ENCODE measurements at regions of chr14 and their contacts with region 1.

Region 1: GRCh38 chr14:51846631-51847488 is 13.6 kb upstream of the GNG2 start:
- DNase-seq: peak; percentile 96
- ATAC-seq: peak; percentile 89
- H3K4me3 Mint-ChIP-seq: peak overlapping the region; percentile 73
- H3K27ac Mint-ChIP-seq: peak overlapping the region; percentile 96
- H3K4me1 Mint-ChIP-seq: peaks cover 74% of the 10 kb centered on the region
- H3K27me3 Mint-ChIP-seq: no peaks in the 10 kb centered on the region

Region 2: GRCh38 chr14:51715250-51715649 is 131.6 kb before region 1 on chr14:
- CTCF ChIA-PET with region 1: no interaction called
- POLR2A ChIA-PET with region 1: no interaction called
- DNase-seq: no peak
- ATAC-seq: no peak
- H3K4me3 Mint-ChIP-seq: no peak overlapping the region
- H3K27ac Mint-ChIP-seq: no peak overlapping the region
- H3K4me1 Mint-ChIP-seq: peaks cover 2% of the 10 kb centered on the region
- H3K27me3 Mint-ChIP-seq: no peaks in the 10 kb centered on the region

Region 3: DNA sequence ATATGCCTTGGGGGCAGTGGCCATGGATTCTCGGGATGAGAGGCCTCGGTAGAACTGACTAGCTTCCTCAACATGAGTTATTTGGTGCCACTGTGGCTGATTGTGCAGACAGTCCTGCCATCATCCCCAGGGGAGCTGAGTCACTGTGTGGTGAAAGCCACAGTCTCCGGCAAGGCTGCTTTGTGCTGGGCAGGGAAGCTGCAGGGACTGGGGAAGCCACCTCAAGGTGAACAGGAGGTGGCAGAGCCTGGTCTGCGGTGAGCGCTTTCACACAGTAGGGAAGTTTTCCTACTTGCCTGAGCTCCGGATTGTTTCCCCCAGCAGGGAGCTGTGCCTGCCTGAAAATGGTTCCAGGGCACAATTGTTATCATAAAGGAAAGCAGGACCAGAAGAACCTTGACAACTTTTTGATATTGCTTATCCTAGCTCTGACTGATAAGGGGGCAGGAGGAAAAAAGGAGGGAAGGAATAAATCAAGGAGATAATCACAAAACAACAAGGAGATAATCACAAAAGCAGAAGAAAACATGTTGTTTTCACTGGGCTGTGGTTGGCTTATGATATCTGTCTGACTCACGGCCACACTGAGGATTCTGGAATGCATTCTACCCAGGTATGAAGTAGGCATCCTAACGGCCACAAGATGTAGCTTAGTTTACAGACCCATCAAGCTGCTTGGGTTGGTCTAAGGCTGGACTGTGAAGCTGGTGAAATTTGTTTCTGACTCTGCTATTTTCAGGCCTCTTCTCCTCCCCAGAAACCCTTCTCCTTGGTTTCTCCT is 18.7 kb before region 1 on chr14:
- CTCF ChIA-PET with region 1: interaction called, 10 read pairs
- POLR2A ChIA-PET with region 1: interaction called, 12 read pairs
- DNase-seq: peak; percentile 80
- ATAC-seq: peak; percentile 99
- H3K4me3 Mint-ChIP-seq: no peak overlapping the region
- H3K27ac Mint-ChIP-seq: no peak overlapping the region
- H3K4me1 Mint-ChIP-seq: no peaks in the 10 kb centered on the region
- H3K27me3 Mint-ChIP-seq: peaks cover 4% of the 10 kb centered on the region

Region 4: DNA sequence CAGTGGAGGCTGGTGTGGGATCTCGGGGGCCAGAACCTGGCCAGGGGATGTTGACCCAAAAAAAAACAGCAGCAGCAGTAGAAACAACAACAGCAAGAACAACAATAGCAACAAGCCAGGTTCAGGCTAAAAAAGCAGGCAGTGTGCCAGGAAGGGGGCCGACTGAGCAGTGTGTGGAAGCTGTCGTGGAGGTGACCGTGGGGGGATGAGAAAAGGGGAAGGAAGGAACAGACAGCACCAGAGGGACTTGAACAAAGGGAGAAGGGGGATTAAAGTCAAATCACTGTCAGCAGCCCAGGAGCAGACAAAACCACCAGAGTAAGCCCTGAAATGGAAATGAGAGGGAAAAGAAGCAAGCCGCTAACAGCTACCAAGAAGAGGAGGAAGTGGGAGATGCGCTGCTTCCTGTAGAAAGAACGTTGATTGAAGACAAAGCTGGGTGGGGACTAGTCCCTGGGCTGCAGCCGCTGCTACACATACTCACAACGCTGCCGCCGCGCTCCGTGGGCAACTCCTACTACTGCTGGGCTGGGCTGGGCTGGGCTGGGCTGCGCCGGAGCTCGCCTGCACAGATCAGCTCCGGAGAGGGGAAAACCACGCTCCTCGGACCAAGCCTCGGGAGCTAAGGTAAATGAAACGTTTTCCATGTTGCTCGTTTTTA is 13.4 kb after region 1 on chr14 and contains the start of gene GNG2:
- CTCF ChIA-PET with region 1: interaction called, 47 read pairs
- POLR2A ChIA-PET with region 1: interaction called, 366 read pairs
- DNase-seq: peak; percentile 93
- ATAC-seq: peak; percentile 97
- H3K4me3 Mint-ChIP-seq: peak within 1 kb of the TSS; percentile 96
- H3K27ac Mint-ChIP-seq: peak within 1 kb of the TSS; percentile 95
- H3K4me1 Mint-ChIP-seq: peaks cover 48% of the 10 kb centered on the region
- H3K27me3 Mint-ChIP-seq: no peaks in the 10 kb centered on the region
- total RNA-seq, gene GNG2: 293 to 302 TPM

Region 5: DNA sequence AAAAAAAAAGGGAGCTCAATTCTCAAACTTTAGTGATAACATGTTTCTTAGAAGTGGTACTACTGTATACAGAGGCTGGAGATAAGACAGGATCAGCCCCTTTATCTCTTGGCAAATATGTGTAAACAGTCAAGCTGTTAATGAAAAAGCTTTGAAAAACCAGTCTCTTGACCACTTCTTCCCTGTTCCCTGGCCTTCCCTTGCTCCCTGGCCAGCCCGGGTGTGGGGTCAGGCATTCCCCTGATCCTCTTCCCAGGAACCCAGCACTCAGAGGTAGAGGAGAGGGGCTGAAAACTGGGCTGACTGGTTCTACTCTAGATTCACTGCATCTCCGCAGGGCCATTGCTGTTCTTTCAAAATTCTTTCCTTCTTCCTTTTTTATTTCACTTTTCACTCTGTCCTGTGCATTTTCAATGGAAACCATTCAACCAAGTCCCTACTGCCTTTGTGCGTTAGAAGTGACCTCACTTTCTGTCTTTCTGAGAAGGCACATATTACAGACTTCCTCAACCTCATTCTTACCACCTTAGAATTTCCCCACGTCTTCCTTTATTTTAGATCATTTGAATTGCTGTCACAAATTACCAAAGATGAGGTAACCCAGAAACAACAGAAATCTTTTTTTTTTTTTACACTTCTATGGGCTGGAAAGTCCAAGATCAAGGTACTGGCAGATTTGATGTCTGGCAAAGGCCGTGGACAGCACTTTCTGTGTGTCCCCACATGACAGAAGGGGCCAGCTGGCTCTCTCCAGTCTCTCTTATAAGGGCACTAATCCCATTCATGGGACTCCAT is 19.3 kb after region 1 on chr14:
- CTCF ChIA-PET with region 1: interaction called, 47 read pairs
- POLR2A ChIA-PET with region 1: interaction called, 366 read pairs
- DNase-seq: no peak
- ATAC-seq: peak; percentile 38
- H3K4me3 Mint-ChIP-seq: no peak overlapping the region
- H3K27ac Mint-ChIP-seq: no peak overlapping the region
- H3K4me1 Mint-ChIP-seq: peaks cover 23% of the 10 kb centered on the region
- H3K27me3 Mint-ChIP-seq: no peaks in the 10 kb centered on the region

Region 6: DNA sequence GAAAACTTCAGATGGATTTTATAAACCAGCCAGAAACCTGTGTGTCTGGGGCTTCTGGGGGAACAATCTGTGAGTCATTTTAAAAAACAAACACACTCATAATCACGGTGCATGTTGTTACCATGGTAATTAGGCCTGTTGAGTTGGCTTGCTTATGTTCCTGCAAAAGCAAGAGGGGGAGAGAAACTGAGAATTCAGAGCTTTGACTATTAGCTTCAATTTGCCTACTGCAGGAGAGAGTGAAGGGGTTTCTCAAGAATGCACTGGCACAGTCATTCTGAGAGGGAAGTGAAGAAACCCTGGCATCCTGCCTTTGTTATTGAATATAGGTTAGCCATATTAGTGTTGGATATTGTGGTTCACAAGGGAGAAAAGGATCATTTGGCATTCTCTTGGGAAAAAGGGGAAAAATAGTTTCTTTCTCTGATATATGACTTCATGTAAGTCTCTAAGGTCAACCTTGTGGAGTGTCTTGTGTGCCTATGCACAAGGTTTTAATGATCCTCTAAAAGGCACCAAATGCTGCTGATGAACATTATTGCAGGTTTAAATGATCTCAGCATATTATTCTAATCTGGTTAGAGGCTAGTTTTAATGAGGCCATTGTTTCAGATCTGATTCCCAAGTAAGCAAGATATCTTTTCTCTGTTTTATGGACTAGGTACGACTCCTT is 26.5 kb after region 1 on chr14:
- CTCF ChIA-PET with region 1: interaction called, 4 read pairs
- POLR2A ChIA-PET with region 1: interaction called, 366 read pairs
- DNase-seq: peak; percentile 32
- ATAC-seq: peak; percentile 51
- H3K4me3 Mint-ChIP-seq: peak overlapping the region; percentile 1
- H3K27ac Mint-ChIP-seq: peak overlapping the region; percentile 36
- H3K4me1 Mint-ChIP-seq: peaks cover 56% of the 10 kb centered on the region
- H3K27me3 Mint-ChIP-seq: no peaks in the 10 kb centered on the region

Region 7: GRCh38 chr14:51884086-51884927 is 37.4 kb after region 1 on chr14:
- CTCF ChIA-PET with region 1: no interaction called
- POLR2A ChIA-PET with region 1: interaction called, 10 read pairs
- DNase-seq: no peak
- ATAC-seq: peak; percentile 58
- H3K4me3 Mint-ChIP-seq: peak overlapping the region; percentile 48
- H3K27ac Mint-ChIP-seq: peak overlapping the region; percentile 61
- H3K4me1 Mint-ChIP-seq: peaks cover 78% of the 10 kb centered on the region
- H3K27me3 Mint-ChIP-seq: no peaks in the 10 kb centered on the region

Region 8: GRCh38 chr14:51929166-51929565 is 82.3 kb after region 1 on chr14:
- CTCF ChIA-PET with region 1: no interaction called
- POLR2A ChIA-PET with region 1: no interaction called
- DNase-seq: no peak
- ATAC-seq: no peak
- H3K4me3 Mint-ChIP-seq: no peak overlapping the region
- H3K27ac Mint-ChIP-seq: no peak overlapping the region
- H3K4me1 Mint-ChIP-seq: peaks cover 59% of the 10 kb centered on the region
- H3K27me3 Mint-ChIP-seq: no peaks in the 10 kb centered on the region